ENCODE measurements at regions of chr2 and their contacts with region 1.

Region 1: GRCh38 chr2:218168635-218169462 is 2.1 kb upstream of the CXCR1 start:
- DNase-seq: peak; percentile 80
- ATAC-seq: peak; percentile 80
- H3K4me3 Mint-ChIP-seq: no peak overlapping the region
- H3K27ac Mint-ChIP-seq: no peak overlapping the region
- H3K4me1 Mint-ChIP-seq: peaks cover 18% of the 10 kb centered on the region
- H3K27me3 Mint-ChIP-seq: no peaks in the 10 kb centered on the region

Region 2: GRCh38 chr2:217685255-217685605 is 483.6 kb before region 1 on chr2:
- CTCF ChIA-PET with region 1: no interaction called
- POLR2A ChIA-PET with region 1: no interaction called
- intact Hi-C with region 1: no loop called
- DNase-seq: no peak
- ATAC-seq: no peak
- H3K4me3 Mint-ChIP-seq: no peak overlapping the region
- H3K27ac Mint-ChIP-seq: no peak overlapping the region
- H3K4me1 Mint-ChIP-seq: no peaks in the 10 kb centered on the region
- H3K27me3 Mint-ChIP-seq: peaks cover 2% of the 10 kb centered on the region

Region 3: GRCh38 chr2:218003981-218004419 is 164.8 kb before region 1 on chr2:
- CTCF ChIA-PET with region 1: no interaction called
- POLR2A ChIA-PET with region 1: no interaction called
- intact Hi-C with region 1: no loop called
- DNase-seq: no peak
- ATAC-seq: no peak
- H3K4me3 Mint-ChIP-seq: no peak overlapping the region
- H3K27ac Mint-ChIP-seq: no peak overlapping the region
- H3K4me1 Mint-ChIP-seq: peaks cover 2% of the 10 kb centered on the region
- H3K27me3 Mint-ChIP-seq: peaks cover 2% of the 10 kb centered on the region

Region 4: DNA sequence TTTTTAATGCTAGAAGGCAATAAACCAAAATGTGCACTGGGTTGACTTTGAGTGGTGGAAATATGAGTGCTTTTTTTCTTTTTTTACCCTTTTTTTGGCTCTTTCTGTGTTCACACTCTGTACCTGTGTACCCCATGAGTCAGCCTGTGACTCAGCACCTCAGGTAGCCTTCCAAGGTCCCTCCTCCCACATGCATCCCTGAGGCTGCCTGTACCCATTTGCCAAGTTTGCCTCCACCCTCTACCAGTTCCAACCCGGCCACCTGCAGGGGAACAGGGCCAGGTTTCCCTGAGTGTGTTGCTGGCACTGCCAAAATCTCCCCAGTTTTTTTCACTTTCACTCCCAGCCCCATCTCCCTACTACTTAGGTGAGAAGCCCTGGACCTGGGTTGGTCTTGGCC is 16.1 kb before region 1 on chr2:
- CTCF ChIA-PET with region 1: interaction called, 13 read pairs
- POLR2A ChIA-PET with region 1: no interaction called
- intact Hi-C with region 1: no loop called
- DNase-seq: no peak
- ATAC-seq: no peak
- H3K4me3 Mint-ChIP-seq: no peak overlapping the region
- H3K27ac Mint-ChIP-seq: no peak overlapping the region
- H3K4me1 Mint-ChIP-seq: no peaks in the 10 kb centered on the region
- H3K27me3 Mint-ChIP-seq: peaks cover 2% of the 10 kb centered on the region

Region 5: DNA sequence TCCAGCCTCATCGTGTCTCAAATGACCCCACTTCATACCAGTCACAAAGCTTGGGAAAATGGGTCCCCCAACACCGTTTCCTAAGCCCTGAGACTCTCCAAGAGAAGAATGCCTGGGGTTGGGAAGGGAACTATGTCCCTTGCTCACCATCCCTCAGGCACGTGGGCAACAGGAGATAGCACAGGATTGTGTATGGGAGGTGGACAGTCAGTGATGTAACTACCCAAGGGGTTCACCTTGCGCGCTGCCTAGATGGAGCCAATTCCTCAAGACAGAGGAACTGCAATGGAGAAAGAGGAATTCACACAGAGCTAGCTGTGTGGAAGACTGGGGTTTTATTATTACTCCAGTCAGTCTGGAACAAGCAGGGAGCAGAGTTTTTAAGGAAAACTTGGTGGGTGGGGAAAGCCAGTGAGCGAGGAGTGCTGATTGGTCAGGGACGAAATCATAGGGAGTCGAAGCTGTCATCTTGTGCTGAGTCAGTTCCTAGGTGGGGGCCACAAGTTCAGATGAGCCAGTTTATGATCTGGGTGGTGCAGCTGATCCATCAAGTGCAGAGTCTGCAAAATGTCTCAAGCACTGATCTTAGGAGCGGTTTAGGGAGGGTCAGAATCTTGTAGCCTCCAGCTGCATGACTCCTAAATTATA is 11.7 kb after region 1 on chr2:
- CTCF ChIA-PET with region 1: interaction called, 11 read pairs
- POLR2A ChIA-PET with region 1: no interaction called
- intact Hi-C with region 1: no loop called
- DNase-seq: no peak
- ATAC-seq: no peak
- H3K4me3 Mint-ChIP-seq: no peak overlapping the region
- H3K27ac Mint-ChIP-seq: no peak overlapping the region
- H3K4me1 Mint-ChIP-seq: no peaks in the 10 kb centered on the region
- H3K27me3 Mint-ChIP-seq: peaks cover 2% of the 10 kb centered on the region